ENCODE measurements at regions of chr16 and their contacts with region 1.

Region 1: GRCh38 chr16:87877938-87878507 is 8.7 kb upstream of the SLC7A5 start:
- DNase-seq: no peak
- H3K4me3 ChIP-seq: no peak overlapping the region
- H3K4me3 Mint-ChIP-seq: no peak overlapping the region
- H3K27ac ChIP-seq: no peak overlapping the region
- H3K27ac Mint-ChIP-seq: no peak overlapping the region
- H3K4me1 ChIP-seq: peaks cover 13% of the 10 kb centered on the region
- H3K4me1 Mint-ChIP-seq: peaks cover 6 to 11% (median 9%) of the 10 kb centered on the region in 4 donors
- H3K27me3 ChIP-seq: no peaks in the 10 kb centered on the region
- H3K27me3 Mint-ChIP-seq: peaks cover 2% of the 10 kb centered on the region in 2 donors

Region 2: DNA sequence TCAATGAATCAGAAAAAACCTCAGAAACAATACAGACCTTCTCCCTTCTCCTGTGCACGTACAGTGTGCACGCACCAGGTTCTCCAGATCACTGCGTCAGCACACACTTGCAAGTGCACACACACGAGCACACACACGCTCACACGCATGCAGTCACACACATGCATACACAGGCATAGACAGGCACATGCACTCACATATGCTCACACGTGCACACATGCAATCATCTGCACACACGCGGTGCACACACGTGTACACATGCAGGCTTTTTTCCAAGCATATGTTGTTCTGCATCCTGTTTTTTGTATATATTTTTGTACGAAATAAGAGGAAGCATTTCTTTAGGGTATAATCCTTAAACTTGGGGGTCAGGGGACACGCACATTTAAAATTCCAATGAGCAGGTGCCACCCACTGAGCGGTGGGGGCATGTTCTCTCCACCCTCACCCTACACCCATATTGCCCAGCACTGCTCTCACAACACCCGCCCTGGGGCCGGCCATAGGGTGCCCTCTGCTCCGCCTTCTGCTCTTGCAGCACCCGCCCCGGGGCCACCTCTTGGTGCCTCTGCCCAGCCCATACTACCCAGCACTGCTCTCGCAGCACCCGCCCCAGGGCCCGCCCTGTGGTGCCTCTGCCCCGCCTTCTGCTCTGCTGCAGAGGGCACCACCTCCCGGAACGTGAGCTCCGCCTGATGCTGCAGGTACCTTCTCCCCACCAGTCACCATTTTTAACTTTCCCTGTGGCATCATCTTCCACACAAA is 133.1 kb before region 1 on chr16:
- CTCF ChIA-PET with region 1: no interaction called
- POLR2A ChIA-PET with region 1: no interaction called
- intact Hi-C with region 1: no loop called
- DNase-seq: no peak
- H3K4me3 ChIP-seq: no peak overlapping the region
- H3K4me3 Mint-ChIP-seq: no peak overlapping the region
- H3K27ac ChIP-seq: no peak overlapping the region
- H3K27ac Mint-ChIP-seq: peak overlapping the region in 1 of 7 donors; percentile 60
- H3K4me1 ChIP-seq: no peaks in the 10 kb centered on the region
- H3K4me1 Mint-ChIP-seq: peaks cover 0 to 16% (median 11%) of the 10 kb centered on the region in 4 donors
- H3K27me3 ChIP-seq: no peaks in the 10 kb centered on the region
- H3K27me3 Mint-ChIP-seq: no peaks in the 10 kb centered on the region

Region 3: GRCh38 chr16:87895641-87896141 is 17.7 kb after region 1 on chr16:
- CTCF ChIA-PET with region 1: interaction called, 37 read pairs
- POLR2A ChIA-PET with region 1: interaction called, 5 read pairs
- intact Hi-C with region 1: no loop called
- DNase-seq: peak in 4 of 5 donors; percentile 17 to 86 (median 27)
- H3K4me3 ChIP-seq: no peak overlapping the region
- H3K4me3 Mint-ChIP-seq: peak overlapping the region in 6 of 8 donors; percentile 36 to 83 (median 68)
- H3K27ac ChIP-seq: peak overlapping the region; percentile 13
- H3K27ac Mint-ChIP-seq: peak overlapping the region; percentile 66 to 93 (median 89)
- H3K4me1 ChIP-seq: peaks cover 34% of the 10 kb centered on the region
- H3K4me1 Mint-ChIP-seq: peaks cover 22 to 37% (median 29%) of the 10 kb centered on the region in 4 donors
- H3K27me3 ChIP-seq: no peaks in the 10 kb centered on the region
- H3K27me3 Mint-ChIP-seq: no peaks in the 10 kb centered on the region

Region 4: GRCh38 chr16:87939303-87940077 is 61.5 kb after region 1 on chr16:
- CTCF ChIA-PET with region 1: no interaction called
- POLR2A ChIA-PET with region 1: no interaction called
- intact Hi-C with region 1: no loop called
- DNase-seq: no peak
- H3K4me3 ChIP-seq: no peak overlapping the region
- H3K4me3 Mint-ChIP-seq: no peak overlapping the region
- H3K27ac ChIP-seq: no peak overlapping the region
- H3K27ac Mint-ChIP-seq: no peak overlapping the region
- H3K4me1 ChIP-seq: no peaks in the 10 kb centered on the region
- H3K4me1 Mint-ChIP-seq: peaks cover 0 to 3% (median 0%) of the 10 kb centered on the region in 4 donors
- H3K27me3 ChIP-seq: no peaks in the 10 kb centered on the region
- H3K27me3 Mint-ChIP-seq: peaks cover 0 to 1% of the 10 kb centered on the region in 2 donors